Activated T-helper 1 cell treated with anti-CD3 and anti-CD28 coated beads, Interleukin-12 subunit alpha, Interleukin-12 subunit beta, Interleukin-2, Interleukin-4 antibody, amounts not matched to agents 30 ng/mL and 10 ng/mL and 1 ng/mL, durations not matched to agents 14 hours and 24 hours and 36 hours (primary cell): ENCODE measurements at regions of chr14 and their contacts with region 1.

Region 1: GRCh38 chr14:93206793-93207467 is at the starts of genes GON7 and UBR7:
- DNase-seq: peak; percentile 89
- H3K4me3 Mint-ChIP-seq: peak within 1 kb of the TSS; percentile 99
- H3K27ac Mint-ChIP-seq: peak within 1 kb of the TSS; percentile 93
- H3K4me1 Mint-ChIP-seq: peaks cover 48% of the 10 kb centered on the region
- H3K27me3 Mint-ChIP-seq: no peaks in the 10 kb centered on the region
- total RNA-seq, gene GON7: 14.8 and 15.7 TPM in 2 replicates
- total RNA-seq, gene UBR7: 30.1 and 32.4 TPM in 2 replicates

Region 2: DNA sequence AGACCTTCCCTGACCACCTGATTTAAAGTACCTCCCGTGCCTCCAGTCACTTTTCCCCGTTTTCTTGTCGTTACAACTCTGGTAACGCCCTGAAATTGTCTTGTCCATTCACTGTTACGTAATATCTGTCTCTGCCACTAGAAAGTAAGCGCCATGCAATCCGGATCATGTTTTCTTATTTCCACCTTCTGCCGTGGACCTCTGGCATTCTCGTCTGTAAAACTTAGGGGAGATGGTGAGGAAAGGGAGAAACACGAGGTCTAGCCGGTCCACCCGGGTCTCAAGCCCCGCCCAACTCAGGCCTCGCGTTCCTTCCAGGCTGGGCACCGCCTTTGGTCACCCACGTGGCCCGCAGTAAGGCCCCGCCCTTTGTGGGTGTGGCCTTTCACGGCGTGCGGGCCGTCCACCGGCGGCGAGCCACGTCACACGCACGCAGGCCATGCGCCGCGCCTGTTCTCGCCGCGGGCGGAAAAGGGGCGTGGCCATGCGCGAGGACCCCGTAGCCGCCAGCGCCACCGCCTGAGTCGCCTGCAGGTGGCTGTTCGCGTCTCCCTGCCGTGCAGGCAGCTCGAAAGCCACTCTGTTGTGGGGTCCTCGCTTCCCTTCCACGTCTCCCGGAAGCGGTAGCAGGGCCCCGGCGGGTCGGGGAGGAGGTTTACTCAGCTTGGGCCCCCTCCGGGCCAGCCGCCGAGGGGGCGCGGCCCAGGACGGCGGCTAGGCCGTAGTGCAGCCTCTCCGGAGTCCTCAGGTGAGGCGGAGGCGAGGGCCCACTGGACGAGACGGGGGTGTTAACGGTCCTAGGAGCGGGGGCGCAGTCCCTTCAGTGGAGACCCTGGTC is 413.0 kb before region 1 on chr14 and contains the start of gene GOLGA5:
- intact Hi-C with region 1: loop called (anchors 2 kb)
- DNase-seq: peak; percentile 98
- H3K4me3 Mint-ChIP-seq: peak within 1 kb of the TSS; percentile 99
- H3K27ac Mint-ChIP-seq: peak within 1 kb of the TSS; percentile 98
- H3K4me1 Mint-ChIP-seq: peaks cover 30% of the 10 kb centered on the region
- H3K27me3 Mint-ChIP-seq: no peaks in the 10 kb centered on the region
- total RNA-seq, gene GOLGA5: 22.2 and 22.6 TPM in 2 replicates

Region 3: GRCh38 chr14:93219103-93219726 is 12.3 kb after region 1 on chr14:
- intact Hi-C with region 1: loop called (anchors 1 kb)
- DNase-seq: peak; percentile 14
- H3K4me3 Mint-ChIP-seq: no peak overlapping the region
- H3K27ac Mint-ChIP-seq: no peak overlapping the region
- H3K4me1 Mint-ChIP-seq: no peaks in the 10 kb centered on the region
- H3K27me3 Mint-ChIP-seq: no peaks in the 10 kb centered on the region

Region 4: DNA sequence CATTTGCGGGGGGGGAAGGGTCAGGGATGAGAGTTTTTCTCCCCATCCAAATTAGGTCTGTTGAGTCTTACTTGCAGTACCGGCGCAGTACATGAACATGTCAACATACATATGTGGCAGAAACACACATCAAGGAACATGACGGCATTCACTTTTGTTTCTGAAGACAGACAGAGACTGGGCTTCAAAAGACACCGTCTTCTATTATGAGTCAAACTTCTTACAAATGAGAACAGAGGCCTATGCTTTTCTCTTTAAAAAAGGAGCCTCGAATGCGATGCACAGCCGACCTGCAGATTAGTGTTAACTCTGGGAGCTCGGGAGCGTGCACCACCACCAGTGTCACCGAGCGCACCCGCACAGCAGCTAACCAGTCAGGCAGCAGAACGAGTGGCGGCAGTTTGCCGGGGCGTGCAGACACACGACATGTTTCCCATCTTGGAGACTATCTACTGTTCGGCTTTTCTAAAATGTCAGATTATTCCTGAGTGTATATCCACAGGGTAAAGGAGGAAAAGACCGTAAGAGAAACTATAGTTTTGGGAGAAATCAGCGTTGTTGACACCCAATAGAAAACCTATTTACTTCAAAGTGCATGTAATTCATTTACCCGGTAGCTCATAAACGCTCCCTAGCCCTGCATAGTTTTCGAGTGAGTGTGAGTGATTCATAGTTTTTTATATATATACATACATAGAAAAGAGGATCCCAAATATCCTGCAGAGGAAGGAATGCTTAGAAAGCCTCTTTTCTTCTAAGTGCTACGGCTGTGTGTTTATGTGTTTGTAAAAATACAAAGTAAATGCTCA is 33.1 kb after region 1 on chr14:
- intact Hi-C with region 1: no loop called
- DNase-seq: no peak
- H3K4me3 Mint-ChIP-seq: no peak overlapping the region
- H3K27ac Mint-ChIP-seq: no peak overlapping the region
- H3K4me1 Mint-ChIP-seq: no peaks in the 10 kb centered on the region
- H3K27me3 Mint-ChIP-seq: peaks cover 2% of the 10 kb centered on the region

Region 5: GRCh38 chr14:93263416-93263815 is 56.5 kb after region 1 on chr14:
- intact Hi-C with region 1: no loop called
- DNase-seq: no peak
- H3K4me3 Mint-ChIP-seq: no peak overlapping the region
- H3K27ac Mint-ChIP-seq: no peak overlapping the region
- H3K4me1 Mint-ChIP-seq: peaks cover 6% of the 10 kb centered on the region
- H3K27me3 Mint-ChIP-seq: no peaks in the 10 kb centered on the region

Region 6: DNA sequence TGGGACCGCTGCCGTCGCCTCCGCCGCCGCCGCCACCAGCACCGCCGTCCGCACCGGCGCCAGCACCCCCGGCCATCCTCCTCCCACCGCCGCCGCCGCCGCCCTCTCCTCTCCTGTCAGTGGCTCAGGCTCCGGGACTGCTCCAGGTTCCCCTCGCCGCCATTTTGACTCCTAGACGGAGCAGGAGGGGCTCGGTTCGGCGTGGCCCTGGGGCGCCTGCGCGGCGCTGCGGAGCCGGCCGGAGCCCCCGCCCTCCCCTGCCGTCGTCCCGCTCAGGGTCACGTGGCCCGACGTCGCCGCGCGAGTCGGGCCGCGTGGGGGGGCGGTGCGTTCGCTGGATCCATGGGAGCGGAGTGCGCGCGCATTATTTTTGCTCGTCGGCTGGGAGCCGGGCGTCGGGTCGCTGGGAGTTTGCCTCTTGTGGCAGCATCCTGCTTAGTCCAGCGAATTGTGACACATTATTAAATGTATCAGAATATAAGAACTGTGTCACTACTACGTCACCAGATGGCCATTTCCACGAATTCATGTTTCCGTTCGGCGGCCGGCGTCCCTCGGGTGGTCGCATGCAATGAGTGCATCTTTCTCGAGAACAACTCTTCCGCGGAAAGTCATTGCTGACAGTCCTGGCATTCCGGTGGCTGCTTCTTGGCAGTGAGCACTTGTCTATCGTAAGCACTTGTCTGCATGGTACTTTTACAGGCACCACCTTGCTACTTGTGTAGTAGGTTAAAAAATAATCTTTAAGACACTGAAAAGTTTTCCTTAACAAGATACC is 126.1 kb after region 1 on chr14 and contains the start of gene BTBD7:
- intact Hi-C with region 1: loop called (anchors 1 kb)
- DNase-seq: peak; percentile 94
- H3K4me3 Mint-ChIP-seq: peak within 1 kb of the TSS; percentile 92
- H3K27ac Mint-ChIP-seq: peak within 1 kb of the TSS; percentile 92
- H3K4me1 Mint-ChIP-seq: peaks cover 49% of the 10 kb centered on the region
- H3K27me3 Mint-ChIP-seq: no peaks in the 10 kb centered on the region
- total RNA-seq, gene BTBD7: 20.6 and 22.8 TPM in 2 replicates

Region 7: DNA sequence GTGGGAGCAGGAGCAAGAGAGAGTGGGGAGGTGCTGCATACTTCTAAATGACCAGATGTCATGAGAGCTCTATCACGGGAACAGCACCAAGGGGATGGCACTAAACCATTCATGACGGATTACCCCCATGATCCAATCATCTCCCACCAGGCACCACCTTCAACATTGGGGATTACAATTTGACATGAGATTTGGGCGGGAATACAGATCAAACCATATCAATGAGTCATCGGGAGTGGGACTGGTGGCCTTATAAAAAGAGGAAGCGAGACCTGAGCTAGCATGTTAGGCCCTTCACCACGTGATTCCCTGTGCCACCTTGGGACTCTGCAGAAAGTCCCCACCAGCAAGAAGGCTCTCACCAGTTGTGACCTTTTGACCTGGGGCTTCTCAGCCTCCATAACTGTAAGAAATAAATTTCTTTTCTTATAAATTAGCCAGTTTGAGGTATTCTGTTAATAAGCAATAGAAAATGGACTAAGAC is 168.8 kb after region 1 on chr14:
- intact Hi-C with region 1: no loop called
- DNase-seq: no peak
- H3K4me3 Mint-ChIP-seq: no peak overlapping the region
- H3K27ac Mint-ChIP-seq: no peak overlapping the region
- H3K4me1 Mint-ChIP-seq: no peaks in the 10 kb centered on the region
- H3K27me3 Mint-ChIP-seq: peaks cover 16% of the 10 kb centered on the region

Region 8: GRCh38 chr14:93619176-93619793 is 412.4 kb after region 1 on chr14:
- intact Hi-C with region 1: loop called (anchors 5 kb)
- DNase-seq: no peak
- H3K4me3 Mint-ChIP-seq: no peak overlapping the region
- H3K27ac Mint-ChIP-seq: no peak overlapping the region
- H3K4me1 Mint-ChIP-seq: no peaks in the 10 kb centered on the region
- H3K27me3 Mint-ChIP-seq: peaks cover 7% of the 10 kb centered on the region

Region 9: DNA sequence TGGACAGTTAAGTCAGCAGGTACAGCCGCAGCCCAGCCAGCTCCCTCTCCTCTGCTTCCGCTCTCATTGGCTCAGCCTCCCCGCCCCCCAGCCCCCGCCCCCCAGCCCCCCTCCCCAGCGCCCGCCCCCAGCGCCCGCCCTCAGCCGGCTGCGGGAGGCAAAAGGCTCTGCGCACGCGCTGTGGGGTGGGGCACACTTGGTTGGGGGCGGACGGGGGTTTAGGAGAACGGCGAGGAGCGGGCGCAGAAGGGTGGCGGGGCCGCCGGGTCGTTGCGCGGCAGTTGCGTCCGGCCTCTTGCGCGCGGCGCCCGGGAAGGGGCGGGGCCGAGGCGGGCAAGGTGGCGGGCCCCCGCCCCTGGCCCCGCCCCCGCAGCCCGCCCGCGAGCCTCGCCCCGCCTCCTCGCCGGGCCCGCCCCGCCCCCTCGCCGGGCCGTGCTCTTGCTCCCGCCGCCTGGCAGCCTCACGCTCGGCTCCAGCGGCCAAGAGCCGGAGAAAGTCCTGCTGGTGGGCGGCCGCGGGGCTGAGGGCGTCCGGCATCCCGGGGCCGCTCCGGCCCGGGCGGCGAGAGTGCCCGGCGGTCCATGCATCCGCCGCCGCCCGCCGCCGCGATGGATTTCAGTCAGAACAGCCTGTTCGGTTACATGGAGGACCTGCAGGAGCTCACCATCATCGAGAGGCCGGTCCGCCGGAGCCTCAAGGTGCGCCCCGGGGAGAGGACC is 967.1 kb after region 1 on chr14 and contains the start of gene PPP4R4:
- intact Hi-C with region 1: no loop called
- DNase-seq: peak; percentile 85
- H3K4me3 Mint-ChIP-seq: peak within 1 kb of the TSS; percentile 83
- H3K27ac Mint-ChIP-seq: peak within 1 kb of the TSS; percentile 81
- H3K4me1 Mint-ChIP-seq: peaks cover 22% of the 10 kb centered on the region
- H3K27me3 Mint-ChIP-seq: peaks cover 49% of the 10 kb centered on the region
- total RNA-seq, gene PPP4R4: 2.2 and 2.4 TPM in 2 replicates